ENCODE measurements at regions of chr2 and their contacts with region 1.

Region 1: DNA sequence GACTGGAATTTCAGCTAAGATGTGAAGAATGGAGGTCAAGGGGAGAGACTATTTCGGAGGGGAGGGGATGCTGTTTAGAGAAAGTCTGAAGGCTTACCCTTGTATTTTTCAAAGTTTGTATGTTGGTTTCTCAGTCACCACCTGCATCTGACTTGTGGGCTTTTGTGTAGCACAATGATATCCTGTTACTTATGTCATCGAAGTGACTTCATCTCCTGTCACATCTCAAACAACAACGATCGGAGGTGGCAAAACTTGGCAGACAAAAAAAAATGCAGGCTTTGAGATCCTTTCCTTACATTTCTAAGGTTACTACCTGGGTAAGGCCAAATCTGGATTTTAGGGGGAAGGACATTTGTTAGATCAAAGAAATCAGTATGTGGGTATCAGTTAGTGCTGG is 11.7 kb upstream of the CXCR4 start:
- DNase-seq: peak in 8 of 10 donors; percentile 58 to 91 (median 85)
- ATAC-seq: peak; percentile 37 to 43
- H3K4me3 Mint-ChIP-seq: peak overlapping the region; percentile 73 to 95 (median 87)
- H3K27ac Mint-ChIP-seq: peak overlapping the region; percentile 99 to 100 (median 100)
- H3K4me1 Mint-ChIP-seq: peaks cover 58 to 100% (median 97%) of the 10 kb centered on the region in 4 donors
- H3K27me3 Mint-ChIP-seq: no peaks in the 10 kb centered on the region

Region 2: GRCh38 chr2:136025057-136025973 is 104.3 kb before region 1 on chr2:
- POLR2A ChIA-PET with region 1: no interaction called
- DNase-seq: peak in 7 of 10 donors; percentile 8 to 66 (median 21)
- ATAC-seq: peak; percentile 57 to 82
- H3K4me3 Mint-ChIP-seq: peak overlapping the region; percentile 24 to 66 (median 58)
- H3K27ac Mint-ChIP-seq: peak overlapping the region in 6 of 10 donors; percentile 15 to 75 (median 28)
- H3K4me1 Mint-ChIP-seq: peaks cover 4 to 15% (median 10%) of the 10 kb centered on the region in 4 donors
- H3K27me3 Mint-ChIP-seq: no peaks in the 10 kb centered on the region

Region 3: DNA sequence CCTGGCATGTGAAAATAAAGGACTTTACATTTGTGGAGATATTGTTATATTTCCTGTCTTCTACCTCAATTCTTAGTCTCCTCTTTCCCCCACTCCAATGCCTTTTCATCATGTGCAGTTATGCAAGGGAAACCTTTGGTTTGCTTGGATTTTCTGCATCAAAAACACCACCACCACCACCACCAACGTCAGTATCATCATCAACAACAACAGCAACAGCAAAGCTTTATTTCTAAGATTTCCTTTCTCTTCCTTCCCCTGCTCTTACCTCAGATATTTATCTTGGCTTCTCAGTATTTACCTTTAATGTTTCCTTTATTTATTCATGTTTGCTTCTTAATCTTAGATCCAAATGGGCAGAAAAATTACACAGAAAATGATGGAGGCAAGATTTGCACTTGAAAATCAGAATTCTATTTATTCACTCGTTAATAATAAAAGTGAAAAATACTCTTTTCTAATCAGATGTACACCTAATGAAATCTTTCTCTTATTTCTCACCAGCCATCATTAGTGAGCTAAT is 37.6 kb before region 1 on chr2:
- POLR2A ChIA-PET with region 1: no interaction called
- DNase-seq: peak in 2 of 10 donors; percentile 10 to 27
- ATAC-seq: peak in 1 of 2 donors; percentile 40
- H3K4me3 Mint-ChIP-seq: peak overlapping the region in 1 of 10 donors; percentile 46
- H3K27ac Mint-ChIP-seq: peak overlapping the region in 3 of 10 donors; percentile 3 to 75 (median 43)
- H3K4me1 Mint-ChIP-seq: peaks cover 8 to 19% (median 13%) of the 10 kb centered on the region in 4 donors
- H3K27me3 Mint-ChIP-seq: no peaks in the 10 kb centered on the region

Region 4: DNA sequence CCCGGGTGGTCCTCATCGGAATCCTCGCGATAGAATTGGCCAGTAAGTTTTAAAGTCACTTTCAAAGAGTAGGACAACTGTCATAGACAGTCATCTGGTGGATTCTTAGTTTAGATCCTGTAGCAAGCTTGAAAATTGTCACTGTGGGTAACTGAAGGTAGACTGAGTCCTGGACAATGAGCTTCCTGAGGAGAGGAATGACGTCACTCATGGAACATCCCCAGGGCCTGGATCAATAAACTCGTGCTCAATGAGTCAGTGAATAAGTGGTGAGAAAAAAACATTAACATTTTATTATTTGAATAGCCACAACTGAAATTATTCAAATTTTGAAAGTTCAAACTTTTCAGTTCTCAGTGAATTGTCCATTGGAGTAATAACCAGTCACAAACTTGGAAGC is 89.7 kb after region 1 on chr2:
- POLR2A ChIA-PET with region 1: no interaction called
- DNase-seq: no peak
- ATAC-seq: no peak
- H3K4me3 Mint-ChIP-seq: no peak overlapping the region
- H3K27ac Mint-ChIP-seq: peak overlapping the region in 2 of 10 donors; percentile 9 to 68
- H3K4me1 Mint-ChIP-seq: peaks cover 6 to 64% (median 18%) of the 10 kb centered on the region in 4 donors
- H3K27me3 Mint-ChIP-seq: no peaks in the 10 kb centered on the region

Region 5: GRCh38 chr2:136238286-136239078 is 108.9 kb after region 1 on chr2:
- POLR2A ChIA-PET with region 1: interaction called, 79 read pairs
- DNase-seq: peak in 7 of 10 donors; percentile 18 to 73 (median 51)
- ATAC-seq: peak; percentile 77 to 86
- H3K4me3 Mint-ChIP-seq: peak overlapping the region in 9 of 10 donors; percentile 11 to 61 (median 38)
- H3K27ac Mint-ChIP-seq: peak overlapping the region; percentile 87 to 96 (median 94)
- H3K4me1 Mint-ChIP-seq: peaks cover 36 to 89% (median 58%) of the 10 kb centered on the region in 4 donors
- H3K27me3 Mint-ChIP-seq: no peaks in the 10 kb centered on the region

Region 6: DNA sequence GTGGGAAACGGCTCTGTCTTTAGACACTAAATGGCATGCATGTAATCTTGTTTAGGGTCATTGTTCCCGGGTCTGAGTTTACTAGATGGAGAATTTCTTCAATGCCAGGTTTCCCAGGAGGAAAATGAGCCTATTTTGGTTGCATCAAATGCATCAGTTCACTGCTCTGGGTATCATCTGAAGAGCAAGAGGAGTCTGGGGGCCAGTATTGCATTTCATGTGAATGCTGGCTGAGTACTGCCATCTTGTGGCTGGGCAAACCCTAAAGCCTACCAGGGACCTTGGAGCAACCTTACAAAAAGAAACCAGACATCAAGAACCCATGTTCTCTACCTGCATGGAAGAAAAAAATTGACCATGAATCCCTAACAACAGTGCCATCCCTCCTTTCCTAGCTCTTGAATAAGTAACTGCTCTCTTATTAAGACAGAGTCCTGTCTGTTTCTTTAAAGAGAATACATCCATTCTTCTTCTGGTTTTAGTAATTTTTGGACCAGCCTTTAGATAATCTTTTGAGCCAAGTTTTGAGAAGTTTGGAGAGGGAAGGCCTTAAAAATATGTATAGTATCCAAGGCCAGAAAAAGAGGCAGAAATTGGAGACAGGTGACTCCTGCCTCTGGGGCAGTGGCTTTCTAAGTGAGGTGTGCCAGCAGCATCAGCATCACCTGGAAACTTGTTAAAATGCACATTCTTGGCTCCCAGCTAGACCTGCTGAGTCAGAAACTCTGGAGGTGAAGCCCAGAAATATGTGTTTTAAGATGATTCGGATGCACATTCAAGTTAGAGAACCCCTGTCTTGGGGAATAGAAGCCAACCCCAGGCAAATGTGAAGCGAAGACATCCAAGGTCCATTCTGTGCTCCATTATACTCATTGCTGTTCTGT is 249.4 kb after region 1 on chr2:
- POLR2A ChIA-PET with region 1: interaction called, 34 read pairs
- DNase-seq: peak; percentile 48 to 86 (median 76)
- ATAC-seq: peak; percentile 40 to 59
- H3K4me3 Mint-ChIP-seq: peak overlapping the region in 1 of 10 donors; percentile 18
- H3K27ac Mint-ChIP-seq: peak overlapping the region; percentile 5 to 91 (median 85)
- H3K4me1 Mint-ChIP-seq: peaks cover 42 to 79% (median 68%) of the 10 kb centered on the region in 4 donors
- H3K27me3 Mint-ChIP-seq: no peaks in the 10 kb centered on the region